ENCODE measurements at regions of chr2 and their contacts with region 1.

Region 1: GRCh38 chr2:183292028-183292427 is 167.8 kb downstream of the NUP35 start:
- DNase-seq: no peak
- H3K4me3 ChIP-seq: no peak overlapping the region
- H3K4me3 Mint-ChIP-seq: no peak overlapping the region
- H3K27ac Mint-ChIP-seq: no peak overlapping the region
- H3K4me1 ChIP-seq: no peaks in the 10 kb centered on the region; the same call in 1 of the 2 replicates
- H3K4me1 Mint-ChIP-seq: peaks cover 6% of the 10 kb centered on the region
- H3K27me3 ChIP-seq: no peaks in the 10 kb centered on the region
- H3K27me3 Mint-ChIP-seq: peaks cover 3% of the 10 kb centered on the region
- CTCF ChIP-seq: no peak

Region 2: GRCh38 chr2:183348492-183348891 is 56.5 kb after region 1 on chr2:
- CTCF ChIA-PET with region 1: no interaction called
- POLR2A ChIA-PET with region 1: no interaction called
- intact Hi-C with region 1: loop called (anchors 2 kb)
- DNase-seq: no peak
- H3K4me3 ChIP-seq: no peak overlapping the region
- H3K4me3 Mint-ChIP-seq: no peak overlapping the region
- H3K27ac Mint-ChIP-seq: no peak overlapping the region
- H3K4me1 ChIP-seq: no peaks in the 10 kb centered on the region
- H3K4me1 Mint-ChIP-seq: no peaks in the 10 kb centered on the region
- H3K27me3 ChIP-seq: no peaks in the 10 kb centered on the region
- H3K27me3 Mint-ChIP-seq: no peaks in the 10 kb centered on the region
- CTCF ChIP-seq: peak in 1 of 2 experiments; percentile 28

Region 3: GRCh38 chr2:183490914-183491313 is 198.9 kb after region 1 on chr2:
- CTCF ChIA-PET with region 1: no interaction called
- POLR2A ChIA-PET with region 1: no interaction called
- intact Hi-C with region 1: loop called (anchors 10 kb)
- DNase-seq: no peak
- H3K4me3 ChIP-seq: no peak overlapping the region
- H3K4me3 Mint-ChIP-seq: no peak overlapping the region
- H3K27ac Mint-ChIP-seq: no peak overlapping the region
- H3K4me1 ChIP-seq: 0 out of 2 replicates have a peak, but pooled peaks cover 3% of the 10 kb centered on the region
- H3K4me1 Mint-ChIP-seq: no peaks in the 10 kb centered on the region
- H3K27me3 ChIP-seq: no peaks in the 10 kb centered on the region
- H3K27me3 Mint-ChIP-seq: no peaks in the 10 kb centered on the region
- CTCF ChIP-seq: no peak

Region 4: GRCh38 chr2:183614799-183615435 is 322.9 kb after region 1 on chr2:
- CTCF ChIA-PET with region 1: no interaction called
- POLR2A ChIA-PET with region 1: no interaction called
- intact Hi-C with region 1: loop called (anchors 5 kb)
- DNase-seq: no peak
- H3K4me3 ChIP-seq: no peak overlapping the region
- H3K4me3 Mint-ChIP-seq: no peak overlapping the region
- H3K27ac Mint-ChIP-seq: no peak overlapping the region
- H3K4me1 ChIP-seq: no peaks in the 10 kb centered on the region
- H3K4me1 Mint-ChIP-seq: no peaks in the 10 kb centered on the region
- H3K27me3 ChIP-seq: no peaks in the 10 kb centered on the region
- H3K27me3 Mint-ChIP-seq: peaks cover 3% of the 10 kb centered on the region
- CTCF ChIP-seq: no peak

Region 5: GRCh38 chr2:183666031-183666430 is 374.0 kb after region 1 on chr2:
- CTCF ChIA-PET with region 1: no interaction called
- POLR2A ChIA-PET with region 1: no interaction called
- intact Hi-C with region 1: loop called (anchors 10 kb)
- DNase-seq: no peak
- H3K4me3 ChIP-seq: no peak overlapping the region
- H3K4me3 Mint-ChIP-seq: no peak overlapping the region
- H3K27ac Mint-ChIP-seq: no peak overlapping the region
- H3K4me1 ChIP-seq: no peaks in the 10 kb centered on the region
- H3K4me1 Mint-ChIP-seq: no peaks in the 10 kb centered on the region
- H3K27me3 ChIP-seq: no peaks in the 10 kb centered on the region
- H3K27me3 Mint-ChIP-seq: no peaks in the 10 kb centered on the region
- CTCF ChIP-seq: no peak

Region 6: DNA sequence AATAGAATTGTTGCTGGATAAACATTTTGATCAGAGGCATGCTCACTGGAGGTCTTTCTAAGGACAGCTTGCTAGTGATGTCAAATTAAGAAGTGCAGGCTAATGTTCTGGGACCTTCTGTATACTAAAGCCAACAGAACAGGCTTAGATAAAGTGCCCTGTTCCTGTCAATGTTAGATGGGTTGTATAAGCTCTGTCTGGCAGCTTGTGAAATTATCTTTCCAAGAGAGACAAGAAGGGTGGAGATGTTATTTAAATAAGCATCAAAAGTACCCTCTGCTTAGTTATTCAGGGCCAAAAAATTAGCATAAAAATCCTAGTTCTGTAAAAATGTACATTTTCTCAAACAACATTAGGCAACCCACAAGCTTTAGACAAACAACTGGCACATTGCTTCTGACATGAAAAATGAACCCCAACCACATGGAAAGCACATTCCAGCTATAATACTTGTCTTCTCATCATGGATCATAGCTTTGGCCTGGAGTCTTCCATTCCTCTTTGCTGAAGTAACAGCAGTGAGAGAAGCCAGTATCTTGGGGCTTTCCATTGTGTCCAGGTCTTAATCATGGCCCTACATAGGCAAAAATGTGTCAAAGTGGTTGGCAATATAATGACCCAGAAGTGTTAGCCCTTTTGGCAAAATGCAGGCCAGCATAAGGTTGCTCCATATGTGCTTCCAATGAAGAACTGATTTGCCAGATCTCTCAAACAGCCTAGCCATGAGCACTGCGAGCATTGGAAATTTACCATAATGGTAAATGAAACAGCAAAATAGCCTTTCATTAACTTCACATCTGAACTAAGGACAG is 828.2 kb after region 1 on chr2:
- CTCF ChIA-PET with region 1: no interaction called
- POLR2A ChIA-PET with region 1: no interaction called
- intact Hi-C with region 1: loop called (anchors 10 kb)
- DNase-seq: no peak
- H3K4me3 ChIP-seq: no peak overlapping the region
- H3K4me3 Mint-ChIP-seq: no peak overlapping the region
- H3K27ac Mint-ChIP-seq: no peak overlapping the region
- H3K4me1 ChIP-seq: 0 out of 2 replicates have a peak, but pooled peaks cover 6% of the 10 kb centered on the region
- H3K4me1 Mint-ChIP-seq: peaks cover 4% of the 10 kb centered on the region
- H3K27me3 ChIP-seq: no peaks in the 10 kb centered on the region
- H3K27me3 Mint-ChIP-seq: no peaks in the 10 kb centered on the region
- CTCF ChIP-seq: no peak